Endothelial cell of umbilical vein (primary cell): ENCODE measurements at regions of chr19 and their contacts with region 1.

Region 1: DNA sequence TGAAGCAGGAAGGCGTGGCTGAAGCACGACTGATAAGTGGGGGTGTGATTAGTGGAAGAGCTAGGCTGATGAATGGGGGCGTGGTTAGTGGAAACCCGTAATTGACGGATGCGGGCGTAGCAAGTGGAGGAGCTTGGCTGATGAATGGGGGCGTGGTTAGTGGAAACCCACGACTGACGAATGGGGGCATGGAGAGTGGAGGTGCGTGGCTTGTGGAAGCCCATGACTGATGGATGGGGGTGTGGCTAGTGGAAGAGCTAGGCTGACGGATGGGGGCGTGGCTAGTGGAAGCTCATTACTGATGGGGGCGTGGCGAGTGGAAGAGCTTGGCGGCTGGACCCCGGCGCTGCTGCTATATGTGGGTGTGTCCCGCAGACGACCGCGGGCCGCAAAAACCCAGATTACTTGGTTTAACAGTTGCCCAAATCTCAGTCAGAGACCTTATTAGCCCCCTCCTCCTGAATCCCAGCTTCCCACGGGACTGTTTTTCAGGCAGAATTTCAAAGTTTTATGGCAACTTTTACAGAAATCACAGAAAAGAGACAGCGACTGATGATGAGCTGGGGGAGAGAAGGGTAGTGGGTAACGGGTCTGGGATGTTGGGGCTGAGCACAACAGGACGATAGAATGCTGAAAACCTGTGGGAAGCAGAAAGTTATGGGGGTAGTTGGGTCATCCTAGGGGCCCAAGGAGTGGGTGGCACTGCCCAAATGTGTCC is 9.0 kb upstream of the MEIS3 start:
- DNase-seq: peak; percentile 99
- H3K4me3 ChIP-seq: no peak overlapping the region
- H3K27ac ChIP-seq: no peak overlapping the region
- H3K4me1 ChIP-seq: peaks cover 8% of the 10 kb centered on the region
- H3K27me3 ChIP-seq: peaks cover 9 to 14% of the 10 kb centered on the region in 2 experiments
- CTCF ChIP-seq: no peak
- POLR2A ChIP-seq: no peak

Region 2: DNA sequence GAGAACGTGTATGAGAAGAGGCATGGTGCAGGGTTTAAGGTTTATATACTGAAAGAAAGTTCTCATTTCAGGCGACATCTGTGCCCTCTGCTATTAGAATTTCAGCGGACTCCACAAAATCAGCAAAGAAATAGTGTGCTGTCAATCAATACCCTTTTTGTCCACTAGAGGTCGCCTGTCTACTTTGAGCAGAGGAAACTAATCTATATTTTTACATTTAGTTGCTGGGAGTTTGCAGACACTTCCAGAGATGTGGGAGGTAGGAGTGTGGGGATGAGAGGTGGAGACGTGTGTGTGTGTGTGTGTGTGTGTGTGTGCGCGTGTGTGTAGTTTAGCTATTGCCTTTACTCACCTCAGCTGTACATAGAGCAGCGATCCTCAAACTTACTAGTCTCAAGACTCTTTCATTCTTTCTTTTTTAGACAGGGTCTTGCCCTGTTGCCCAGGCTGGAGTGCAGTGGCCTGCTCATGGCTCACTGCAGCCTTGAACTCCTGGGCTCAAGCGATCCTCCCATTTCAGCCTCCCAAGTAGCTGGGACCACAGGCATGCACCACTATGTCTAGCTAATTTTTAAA is 143.9 kb before region 1 on chr19:
- CTCF ChIA-PET with region 1: interaction called, 6 read pairs
- POLR2A ChIA-PET with region 1: no interaction called
- dilution Hi-C with region 1: no loop called
- intact Hi-C with region 1: loop called (anchors 1 kb)
- DNase-seq: peak; percentile 57
- H3K4me3 ChIP-seq: no peak overlapping the region
- H3K27ac ChIP-seq: no peak overlapping the region
- H3K4me1 ChIP-seq: no peaks in the 10 kb centered on the region
- H3K27me3 ChIP-seq: no peaks in the 10 kb centered on the region
- CTCF ChIP-seq: peak; percentile 77
- POLR2A ChIP-seq: no peak

Region 3: GRCh38 chr19:47348819-47349795 is 79.2 kb before region 1 on chr19 and contains the start of gene DHX34:
- CTCF ChIA-PET with region 1: interaction called, 11 read pairs
- POLR2A ChIA-PET with region 1: no interaction called
- dilution Hi-C with region 1: no loop called
- intact Hi-C with region 1: no loop called
- DNase-seq: peak; percentile 100
- H3K4me3 ChIP-seq: peak within 1 kb of the TSS; percentile 44 to 55 (median 53)
- H3K27ac ChIP-seq: no peak within 1 kb of the TSS
- H3K4me1 ChIP-seq: peaks cover 6% of the 10 kb centered on the region
- H3K27me3 ChIP-seq: no peaks in the 10 kb centered on the region
- CTCF ChIP-seq: peak; percentile 99 to 100
- POLR2A ChIP-seq: peak; percentile 79
- total RNA-seq, gene DHX34: 15.8 and 20.7 TPM in 2 replicates

Region 4: DNA sequence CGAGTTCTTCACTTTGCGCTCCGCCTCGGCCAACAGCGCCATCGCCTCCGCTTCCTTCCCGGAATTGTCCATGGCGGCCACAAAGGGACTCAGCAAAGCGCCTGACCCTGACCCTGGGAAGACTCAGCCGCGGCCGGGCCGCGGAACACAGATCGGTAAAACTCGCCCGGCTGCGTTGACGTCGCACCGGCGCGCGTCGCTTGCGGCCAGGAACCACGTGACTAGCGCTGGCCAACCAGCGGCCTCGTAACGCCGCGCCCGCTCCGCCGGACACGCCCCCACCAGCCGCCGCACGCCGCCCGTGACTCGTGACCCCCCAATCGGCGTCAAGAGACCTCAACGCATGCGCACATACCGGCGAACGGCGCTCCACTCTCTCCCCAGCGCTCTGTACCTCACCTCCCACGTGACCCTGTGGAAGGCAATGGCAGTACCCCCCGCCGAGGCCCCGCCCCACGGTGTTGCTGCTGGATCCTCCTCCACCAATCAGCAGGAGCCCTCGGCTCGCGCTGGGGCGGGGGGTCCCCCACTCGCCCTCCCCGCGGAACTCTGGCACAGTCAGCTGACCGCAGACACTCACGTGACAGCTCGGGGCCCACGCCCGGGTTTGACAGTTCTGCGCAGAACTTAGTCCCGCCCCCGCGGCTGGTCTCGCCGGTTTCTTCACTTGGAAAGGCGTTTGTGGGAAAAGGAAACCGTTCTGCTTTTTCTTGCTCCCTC is 86.7 kb after region 1 on chr19 and contains the start of gene NAPA:
- CTCF ChIA-PET with region 1: interaction called, 9 read pairs
- POLR2A ChIA-PET with region 1: interaction called, 5 read pairs
- dilution Hi-C with region 1: no loop called
- intact Hi-C with region 1: loop called (anchors 2 kb)
- DNase-seq: peak; percentile 100
- H3K4me3 ChIP-seq: peak within 1 kb of the TSS; percentile 63 to 90 (median 83)
- H3K27ac ChIP-seq: peak within 1 kb of the TSS; percentile 85
- H3K4me1 ChIP-seq: peaks cover 22% of the 10 kb centered on the region
- H3K27me3 ChIP-seq: no peaks in the 10 kb centered on the region
- CTCF ChIP-seq: no peak
- POLR2A ChIP-seq: peak; percentile 90
- total RNA-seq, gene NAPA: 107 TPM in 2 replicates

Region 5: GRCh38 chr19:47713046-47714021 is 285.0 kb after region 1 on chr19 and contains the start of gene EHD2:
- CTCF ChIA-PET with region 1: interaction called, 454 read pairs
- POLR2A ChIA-PET with region 1: no interaction called
- dilution Hi-C with region 1: no loop called
- intact Hi-C with region 1: no loop called
- DNase-seq: peak; percentile 61
- H3K4me3 ChIP-seq: peak within 1 kb of the TSS; percentile 55 to 92 (median 70)
- H3K27ac ChIP-seq: no peak within 1 kb of the TSS
- H3K4me1 ChIP-seq: peaks cover 8% of the 10 kb centered on the region
- H3K27me3 ChIP-seq: no peaks in the 10 kb centered on the region
- CTCF ChIP-seq: peak; percentile 83 to 98
- POLR2A ChIP-seq: peak; percentile 93
- total RNA-seq, gene EHD2: 220 TPM in 2 replicates